ENCODE measurements at regions of chr3 and their contacts with region 1.

Region 1: GRCh38 chr3:186241910-186242821 is 119.9 kb downstream of the DGKG start:
- DNase-seq: peak; percentile 82
- ATAC-seq: peak; percentile 95 to 98

Region 2: DNA sequence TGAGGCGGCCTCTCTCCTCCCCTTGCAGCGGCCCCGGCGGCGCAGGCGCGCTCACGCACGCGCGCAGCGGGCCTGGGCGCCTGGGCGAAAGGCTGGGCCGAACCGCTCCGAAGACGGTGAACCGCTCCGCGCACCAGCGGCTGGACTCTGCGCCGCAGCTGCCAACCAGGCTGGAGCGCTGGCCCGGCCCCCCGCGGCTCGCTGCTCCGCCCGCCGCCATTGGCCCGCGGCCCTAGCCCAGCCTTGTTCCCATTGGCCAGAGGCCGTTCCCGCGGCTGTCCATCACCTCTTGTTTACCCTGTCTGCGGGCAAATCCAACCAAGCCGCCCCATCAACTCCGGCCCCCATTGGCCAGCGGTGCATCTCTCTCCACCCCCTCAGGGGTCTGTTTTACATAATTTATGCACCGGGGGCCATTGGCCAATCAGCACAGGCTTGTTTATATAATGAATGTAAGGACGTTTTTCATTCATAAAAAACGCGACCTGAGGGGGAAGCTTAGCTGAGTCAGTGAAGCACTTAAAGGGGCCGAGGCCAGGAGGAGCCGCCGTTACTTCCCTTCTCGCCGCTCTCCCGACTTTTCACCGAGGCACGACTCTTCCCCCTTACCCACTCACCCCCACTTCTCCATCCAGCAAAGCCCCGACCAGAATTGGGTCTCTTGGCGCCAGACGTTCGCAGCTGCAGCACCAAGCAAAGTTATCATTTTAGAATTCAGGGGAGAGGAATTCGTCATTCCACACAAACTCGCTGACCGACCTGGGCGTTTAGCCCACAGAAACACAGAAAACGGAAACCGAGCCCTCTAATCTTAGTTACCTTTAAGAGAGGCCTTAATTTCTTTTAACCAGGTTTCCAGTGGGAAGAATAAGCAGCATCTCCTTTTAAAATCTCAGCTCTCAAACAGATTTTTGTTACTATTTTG is 133.0 kb before region 1 on chr3 and contains the start of gene ETV5:
- intact Hi-C with region 1: loop called in 1 of 2 experiments (anchors 10 kb)
- DNase-seq: peak; percentile 99
- ATAC-seq: peak; percentile 97 to 98
- total RNA-seq, gene ETV5: 12.5 to 24.0 TPM

Region 3: DNA sequence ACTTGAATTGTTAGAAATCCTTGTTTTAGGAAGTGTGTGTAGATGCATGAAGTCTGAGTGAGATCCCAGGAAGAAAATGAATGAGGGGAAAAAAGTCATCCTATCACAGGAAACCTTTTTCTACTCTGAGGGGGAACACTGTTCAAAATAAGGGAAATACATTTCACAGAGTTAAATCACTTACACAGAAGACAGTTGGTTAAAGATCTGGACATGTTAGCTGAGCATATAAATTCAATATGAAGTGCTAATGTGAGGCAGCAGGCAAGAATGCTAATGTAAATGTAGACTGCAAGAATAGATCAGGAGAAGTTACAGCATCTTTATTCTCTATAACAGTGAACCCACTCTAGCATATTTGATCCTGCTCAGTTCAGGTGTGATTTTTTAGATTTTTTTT is 322.4 kb after region 1 on chr3:
- intact Hi-C with region 1: no loop called
- DNase-seq: no peak
- ATAC-seq: no peak

Region 4: DNA sequence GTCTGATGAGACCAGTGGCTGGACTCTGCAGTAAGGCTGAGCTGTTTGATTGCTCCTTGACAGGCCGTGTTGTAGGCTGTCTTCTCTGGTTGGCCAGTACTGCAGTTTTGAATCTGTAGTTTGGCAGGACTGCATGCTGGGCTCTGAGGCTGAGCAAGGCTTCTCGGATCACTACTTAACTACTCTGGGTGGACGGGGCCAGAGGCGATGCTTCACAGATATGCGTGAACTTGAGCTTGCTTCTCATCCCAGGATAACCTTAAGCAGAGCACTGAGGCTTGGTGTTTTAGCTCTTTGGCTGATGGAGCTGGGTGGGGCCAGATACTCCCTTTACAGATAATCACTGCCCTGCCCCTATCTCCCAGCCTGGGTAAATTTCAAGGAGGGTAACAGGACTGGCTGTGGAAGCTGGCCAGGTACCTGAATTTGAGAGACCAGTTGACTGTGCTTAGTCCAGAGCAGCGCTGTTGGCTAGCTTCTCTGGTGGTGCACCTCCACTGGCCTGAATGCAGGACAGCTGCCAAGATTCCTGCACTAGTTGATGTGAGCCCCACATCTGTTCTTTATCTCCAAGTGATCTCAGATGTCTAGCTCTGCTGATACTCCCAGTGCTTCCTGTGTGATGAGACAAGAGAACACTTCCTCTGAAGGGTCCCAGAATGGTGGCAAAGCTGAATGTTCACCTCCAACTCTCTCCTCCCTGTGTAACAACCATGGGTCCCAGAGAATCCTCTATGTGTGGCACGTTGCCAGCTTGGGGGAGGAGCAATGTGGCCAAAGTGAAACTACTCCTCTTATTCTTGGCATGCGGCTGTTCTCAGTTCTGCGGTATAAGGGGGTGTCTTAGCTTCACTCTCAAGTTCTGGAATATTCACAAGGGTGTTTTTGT is 859.3 kb after region 1 on chr3:
- intact Hi-C with region 1: no loop called
- DNase-seq: peak; percentile 87
- ATAC-seq: peak; percentile 85 to 88